ENCODE measurements at regions of chr15 and their contacts with region 1.

Region 1: GRCh38 chr15:26516102-26516980 is 256.5 kb downstream of the GABRB3 start:
- DNase-seq: no peak
- ATAC-seq: peak in 1 of 2 donors; percentile 10
- H3K4me3 ChIP-seq: no peak overlapping the region
- H3K27ac ChIP-seq: no peak overlapping the region
- H3K4me1 ChIP-seq: peaks cover 2% of the 10 kb centered on the region
- H3K27me3 ChIP-seq: no peaks in the 10 kb centered on the region

Region 2: DNA sequence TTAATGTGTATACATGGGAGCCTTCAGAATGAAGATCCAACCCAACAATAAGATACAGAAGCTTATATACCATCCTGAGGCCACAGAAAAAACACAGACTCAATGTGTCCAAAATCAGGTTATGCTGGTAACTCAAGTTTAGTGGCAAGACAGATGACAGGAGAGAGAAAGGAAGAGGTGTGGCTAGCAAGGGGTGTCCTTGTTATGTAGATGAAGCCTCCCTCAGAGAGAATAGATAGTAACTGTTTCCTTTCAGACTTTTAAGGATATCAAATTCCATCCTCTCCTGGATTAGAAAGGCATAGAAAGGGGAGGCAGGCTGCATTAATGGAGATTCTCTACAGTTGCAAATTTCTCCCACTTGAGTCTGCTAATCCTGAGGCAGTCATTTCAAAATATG is 190.8 kb before region 1 on chr15:
- intact Hi-C with region 1: no loop called
- DNase-seq: no peak
- ATAC-seq: no peak
- H3K4me3 ChIP-seq: no peak overlapping the region
- H3K27ac ChIP-seq: no peak overlapping the region
- H3K4me1 ChIP-seq: no peaks in the 10 kb centered on the region
- H3K27me3 ChIP-seq: no peaks in the 10 kb centered on the region

Region 3: GRCh38 chr15:26572602-26573350 is 56.4 kb after region 1 on chr15:
- intact Hi-C with region 1: loop called in 1 of 4 experiments (anchors 10 kb)
- DNase-seq: no peak
- ATAC-seq: no peak
- H3K4me3 ChIP-seq: no peak overlapping the region
- H3K27ac ChIP-seq: no peak overlapping the region
- H3K4me1 ChIP-seq: no peaks in the 10 kb centered on the region
- H3K27me3 ChIP-seq: no peaks in the 10 kb centered on the region